Left cardiac atrium (tissue), 4 donors: ENCODE measurements at regions of chr2 and their contacts with region 1.

Region 1: DNA sequence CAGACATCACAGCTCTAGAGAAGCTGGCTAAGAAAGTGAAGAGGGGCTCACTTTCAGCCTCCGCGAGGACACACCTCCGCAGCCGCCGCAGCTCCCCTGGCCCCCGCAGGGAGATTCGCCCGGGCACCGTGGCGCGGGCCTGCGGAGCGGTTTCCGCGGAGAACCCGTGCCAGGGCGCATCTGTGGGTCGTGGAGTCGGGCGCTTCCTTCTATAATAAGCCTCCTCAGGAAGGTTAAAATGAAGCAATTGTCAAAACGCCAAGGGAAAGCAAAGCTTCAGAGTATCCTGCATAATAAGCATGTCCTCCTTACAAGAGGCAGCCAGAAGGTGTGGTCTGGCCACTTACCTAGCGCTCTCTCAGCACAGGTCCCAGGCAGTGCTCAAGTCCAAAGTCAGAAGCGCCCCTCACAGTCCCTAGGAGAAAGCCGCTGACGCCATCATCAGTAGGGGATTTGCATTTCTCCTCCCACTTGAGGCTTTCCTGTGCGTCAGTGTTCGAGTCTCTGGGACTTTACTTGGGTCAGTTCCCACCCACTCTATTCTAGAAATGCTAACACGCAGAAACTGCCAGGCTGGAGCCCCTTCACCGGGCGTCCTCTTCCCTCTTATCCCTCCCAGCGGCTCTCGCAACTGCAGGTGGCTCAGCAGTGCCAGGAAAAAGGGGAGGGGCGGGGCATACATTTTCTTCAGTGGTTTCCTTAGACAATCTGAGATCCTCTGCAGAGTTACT is at the start of gene STAT4:
- DNase-seq: peak; percentile 45
- ATAC-seq: peak; percentile 80 to 81
- total RNA-seq, gene STAT4: 11.6 to 22.9 TPM

Region 2: GRCh38 chr2:191051825-191052778 is 98.7 kb before region 1 on chr2:
- intact Hi-C with region 1: loop called (anchors 2 to 10 kb)
- DNase-seq: no peak
- ATAC-seq: peak in 1 of 2 donors; percentile 22